H1 (cell line): ENCODE measurements at regions of chr11 and their contacts with region 1.

Region 1: DNA sequence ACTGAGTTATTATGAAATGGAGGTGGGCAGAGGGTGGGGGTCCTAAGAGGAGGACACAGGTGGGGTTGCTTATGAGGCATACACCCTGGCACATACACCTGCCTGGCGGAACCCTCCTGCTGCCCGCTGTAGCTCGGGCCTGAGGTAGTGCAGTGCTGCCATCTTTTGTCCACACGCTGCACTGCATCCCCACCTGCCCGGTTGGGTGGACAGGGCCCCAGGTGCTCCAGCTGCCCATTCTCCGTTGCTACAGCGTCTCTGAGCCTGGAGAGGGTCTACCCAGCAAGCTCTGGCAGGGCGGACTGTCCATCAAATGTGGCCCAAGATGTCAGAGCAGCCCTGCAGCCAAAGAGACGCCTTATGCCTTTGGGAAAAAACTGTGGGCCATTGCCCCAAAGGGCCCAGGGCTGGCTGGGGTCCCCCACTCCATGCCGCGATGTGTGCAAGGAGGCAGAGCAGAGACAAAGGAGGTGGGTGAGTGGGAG is 131.2 kb downstream of the BUD13 start:
- DNase-seq: peak; percentile 39 to 92
- H3K4me3 ChIP-seq: no peak overlapping the region
- H3K27ac ChIP-seq: no peak overlapping the region
- H3K4me1 ChIP-seq: peaks cover 0 to 9% (median 2%) of the 10 kb centered on the region in 4 experiments; a peak in 5 of 7 replicates
- H3K27me3 ChIP-seq: 0 out of 7 replicates have a peak, but pooled peaks cover 0 to 3% (median 0%) of the 10 kb centered on the region in 4 experiments
- CTCF ChIP-seq: peak; percentile 95 to 100 (median 97)
- EP300 ChIP-seq: no peak
- POLR2A ChIP-seq: no peak
- RAD21 ChIP-seq: peak; percentile 97 to 98

Region 2: DNA sequence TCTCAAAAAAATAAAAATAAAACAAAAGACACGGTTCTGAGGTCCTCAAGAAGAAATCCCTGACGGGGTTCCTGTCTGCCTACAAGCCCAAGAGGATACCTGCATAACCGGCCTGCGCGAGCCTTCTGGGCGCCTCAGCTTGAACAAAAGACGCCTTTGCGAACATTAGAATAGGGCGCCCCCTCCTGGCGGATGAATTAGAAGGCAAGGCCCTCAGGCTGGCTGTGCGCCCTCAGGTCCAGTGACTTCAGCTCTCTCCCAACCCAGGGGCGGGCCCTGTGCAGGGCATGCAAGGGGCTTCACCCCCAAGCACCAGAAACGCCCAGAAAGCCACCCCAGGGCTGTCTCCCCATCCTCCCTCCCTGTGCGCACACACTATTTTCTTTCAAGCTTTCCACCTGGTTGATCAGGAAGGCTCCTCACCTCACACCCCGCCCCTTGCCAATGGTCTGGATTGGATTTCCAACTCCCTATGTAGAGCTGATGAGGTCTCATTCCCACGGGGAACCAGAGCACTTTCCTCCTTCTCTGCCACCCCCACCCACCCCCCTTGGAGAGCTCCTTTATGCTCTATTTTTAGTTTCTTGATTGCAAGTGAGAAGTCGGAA is 142.1 kb before region 1 on chr11:
- CTCF ChIA-PET with region 1: interaction called, 28 read pairs
- POLR2A ChIA-PET with region 1: no interaction called
- DNase-seq: peak; percentile 87 to 99
- H3K4me3 ChIP-seq: no peak overlapping the region
- H3K27ac ChIP-seq: no peak overlapping the region
- H3K4me1 ChIP-seq: peaks cover 11 to 27% (median 15%) of the 10 kb centered on the region in 4 experiments
- H3K27me3 ChIP-seq: peaks cover 0 to 4% (median 1%) of the 10 kb centered on the region in 4 experiments; a peak in 2 of 7 replicates
- CTCF ChIP-seq: peak; percentile 74 to 91 (median 83)
- EP300 ChIP-seq: no peak
- POLR2A ChIP-seq: no peak
- RAD21 ChIP-seq: peak; percentile 85 to 94

Region 3: GRCh38 chr11:116533186-116533825 is 108.3 kb before region 1 on chr11:
- CTCF ChIA-PET with region 1: interaction called, 47 read pairs
- POLR2A ChIA-PET with region 1: no interaction called
- DNase-seq: peak in 1 of 2 experiments; percentile 83
- H3K4me3 ChIP-seq: no peak overlapping the region; a peak in 1 of 8 replicates
- H3K27ac ChIP-seq: no peak overlapping the region
- H3K4me1 ChIP-seq: peaks cover 0 to 4% (median 1%) of the 10 kb centered on the region in 4 experiments; a peak in 2 of 7 replicates
- H3K27me3 ChIP-seq: peaks cover 0 to 3% (median 0%) of the 10 kb centered on the region in 4 experiments; a peak in 3 of 7 replicates
- CTCF ChIP-seq: peak; percentile 62 to 73 (median 63)
- EP300 ChIP-seq: no peak
- POLR2A ChIP-seq: no peak
- RAD21 ChIP-seq: peak; percentile 86 to 90

Region 4: DNA sequence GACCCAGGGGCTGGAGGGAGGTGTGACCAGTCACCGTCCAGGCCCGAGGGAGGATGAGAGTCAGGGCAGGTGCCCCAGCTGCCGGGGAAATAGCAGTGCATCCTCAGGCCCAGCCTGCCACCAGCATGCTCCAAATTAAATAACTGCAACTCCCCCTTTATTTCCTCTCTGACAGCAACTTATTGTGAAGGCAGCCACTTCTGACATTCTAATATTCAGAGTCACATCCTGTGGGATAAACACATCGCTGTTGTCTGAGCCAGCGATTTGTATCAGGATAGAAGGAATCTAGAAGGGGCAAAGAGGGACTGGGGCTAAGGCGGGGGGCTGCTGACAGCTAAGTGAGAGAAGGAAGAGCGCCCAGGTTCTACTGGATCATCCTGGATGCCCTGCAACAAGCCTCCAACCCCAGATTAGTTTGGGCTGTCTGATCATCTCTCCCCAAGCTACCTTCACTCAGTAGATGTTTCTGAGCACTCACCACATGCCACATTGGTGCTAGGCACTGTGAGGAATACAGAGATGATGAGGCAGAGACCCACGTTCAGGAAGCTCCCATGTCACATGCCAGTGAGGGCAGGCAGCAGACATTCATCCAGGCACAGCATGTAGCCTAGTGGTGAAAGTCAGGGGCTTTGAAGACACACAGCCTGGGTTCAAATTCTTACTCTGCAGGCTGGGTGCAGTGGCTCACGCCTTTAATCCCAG is 82.9 kb before region 1 on chr11:
- CTCF ChIA-PET with region 1: interaction called, 21 read pairs
- POLR2A ChIA-PET with region 1: no interaction called
- DNase-seq: no peak
- H3K4me3 ChIP-seq: no peak overlapping the region
- H3K27ac ChIP-seq: no peak overlapping the region
- H3K4me1 ChIP-seq: no peaks in the 10 kb centered on the region; a peak in 1 of 7 replicates
- H3K27me3 ChIP-seq: peaks cover 0 to 2% (median 0%) of the 10 kb centered on the region in 4 experiments; a peak in 1 of 7 replicates
- CTCF ChIP-seq: no peak
- EP300 ChIP-seq: no peak
- POLR2A ChIP-seq: no peak
- RAD21 ChIP-seq: no peak

Region 5: DNA sequence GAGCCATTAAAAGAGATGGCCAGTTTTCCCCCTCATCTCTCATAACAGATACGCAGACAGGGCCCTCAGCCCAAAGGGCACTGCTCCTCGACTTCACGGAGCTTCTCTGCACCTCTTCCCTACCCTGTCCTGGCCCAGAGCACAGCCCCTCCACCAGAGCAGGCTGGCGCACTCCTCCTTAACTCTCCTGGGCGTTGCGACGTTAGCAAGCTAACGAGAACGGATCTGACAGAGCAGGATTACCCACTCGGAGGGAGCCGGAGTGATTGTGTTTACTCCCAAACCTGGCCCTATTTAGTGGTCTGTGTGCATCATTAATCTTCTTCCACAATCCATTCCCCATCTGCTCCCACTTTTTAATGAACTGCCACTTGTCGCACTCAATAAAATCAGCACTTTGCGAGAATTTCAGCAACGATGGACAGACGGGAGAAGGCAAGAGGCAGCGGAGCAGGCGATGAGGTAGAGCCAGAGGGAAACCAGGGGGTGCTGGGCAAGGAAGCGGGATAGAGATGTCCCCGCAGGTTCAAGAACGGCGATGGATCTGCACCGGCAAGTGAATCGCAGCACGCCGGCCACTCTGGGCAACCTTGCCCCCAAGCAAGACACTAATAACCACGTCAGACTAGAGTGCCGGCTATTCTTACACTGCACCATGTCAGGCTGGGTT is 28.3 kb before region 1 on chr11:
- CTCF ChIA-PET with region 1: interaction called, 22 read pairs
- POLR2A ChIA-PET with region 1: no interaction called
- DNase-seq: no peak
- H3K4me3 ChIP-seq: no peak overlapping the region
- H3K27ac ChIP-seq: no peak overlapping the region
- H3K4me1 ChIP-seq: 0 out of 7 replicates have a peak, but pooled peaks cover 0 to 2% (median 0%) of the 10 kb centered on the region in 4 experiments
- H3K27me3 ChIP-seq: no peaks in the 10 kb centered on the region
- CTCF ChIP-seq: no peak
- EP300 ChIP-seq: no peak
- POLR2A ChIP-seq: no peak
- RAD21 ChIP-seq: no peak

Region 6: DNA sequence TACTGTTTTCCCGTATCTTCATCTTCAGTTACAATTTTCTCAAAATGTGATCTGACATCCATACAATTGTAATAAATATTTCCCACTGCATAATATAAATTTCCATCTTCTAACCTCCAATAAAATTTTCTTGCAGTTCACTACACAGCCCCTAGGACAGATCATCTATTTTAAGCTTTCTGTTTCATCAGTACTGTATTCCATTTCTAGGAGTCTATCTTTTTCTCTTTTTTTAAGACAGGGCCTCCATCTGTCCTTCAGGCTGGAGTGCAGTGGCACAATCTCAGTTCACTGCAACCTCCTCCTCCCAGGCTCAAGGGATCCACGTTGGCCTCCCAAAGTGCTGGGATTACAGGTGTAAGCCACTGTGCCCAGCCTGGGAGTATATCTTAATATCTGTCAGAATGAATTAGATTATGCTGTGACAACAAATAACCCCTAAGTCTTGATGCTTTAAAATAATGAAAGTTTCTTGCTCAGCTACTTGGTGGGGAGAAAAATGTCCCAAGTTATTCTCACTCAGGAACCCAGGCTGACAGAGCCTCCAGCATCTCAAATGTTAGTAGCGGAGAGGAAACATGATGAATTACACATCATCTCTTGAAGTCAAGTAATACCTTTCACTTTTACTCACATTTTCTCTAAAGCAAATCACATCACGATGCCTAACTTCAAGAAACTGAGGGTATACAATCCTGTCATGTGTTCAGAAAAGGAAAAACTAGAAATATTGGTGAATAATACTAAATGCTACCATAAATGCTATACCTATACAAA is 38.9 kb after region 1 on chr11:
- CTCF ChIA-PET with region 1: interaction called, 22 read pairs
- POLR2A ChIA-PET with region 1: no interaction called
- DNase-seq: no peak
- H3K4me3 ChIP-seq: no peak overlapping the region
- H3K27ac ChIP-seq: no peak overlapping the region
- H3K4me1 ChIP-seq: no peaks in the 10 kb centered on the region
- H3K27me3 ChIP-seq: no peaks in the 10 kb centered on the region
- CTCF ChIP-seq: no peak
- EP300 ChIP-seq: no peak
- POLR2A ChIP-seq: no peak
- RAD21 ChIP-seq: no peak